ENCODE measurements at regions of chr11 and their contacts with region 1.

Region 1: GRCh38 chr11:3412837-3413236 is 33.9 kb upstream of the ZNF195 start:
- DNase-seq: no peak
- ATAC-seq: no peak
- H3K4me3 ChIP-seq: no peak overlapping the region
- H3K4me3 Mint-ChIP-seq: no peak overlapping the region
- H3K27ac ChIP-seq: no peak overlapping the region
- H3K27ac Mint-ChIP-seq: no peak overlapping the region
- H3K4me1 ChIP-seq: no peaks in the 10 kb centered on the region
- H3K4me1 Mint-ChIP-seq: peaks cover 9% of the 10 kb centered on the region
- H3K27me3 ChIP-seq: no peaks in the 10 kb centered on the region
- H3K27me3 Mint-ChIP-seq: no peaks in the 10 kb centered on the region
- CTCF ChIP-seq: no peak

Region 2: GRCh38 chr11:3060436-3061025 is 352.3 kb before region 1 on chr11:
- CTCF ChIA-PET with region 1: no interaction called
- POLR2A ChIA-PET with region 1: no interaction called
- intact Hi-C with region 1: no loop called
- DNase-seq: no peak
- ATAC-seq: no peak
- H3K4me3 ChIP-seq: no peak overlapping the region
- H3K4me3 Mint-ChIP-seq: no peak overlapping the region
- H3K27ac ChIP-seq: no peak overlapping the region
- H3K27ac Mint-ChIP-seq: no peak overlapping the region
- H3K4me1 ChIP-seq: peaks cover 22% of the 10 kb centered on the region
- H3K4me1 Mint-ChIP-seq: peaks cover 17% of the 10 kb centered on the region
- H3K27me3 ChIP-seq: no peaks in the 10 kb centered on the region
- H3K27me3 Mint-ChIP-seq: no peaks in the 10 kb centered on the region
- CTCF ChIP-seq: no peak

Region 3: DNA sequence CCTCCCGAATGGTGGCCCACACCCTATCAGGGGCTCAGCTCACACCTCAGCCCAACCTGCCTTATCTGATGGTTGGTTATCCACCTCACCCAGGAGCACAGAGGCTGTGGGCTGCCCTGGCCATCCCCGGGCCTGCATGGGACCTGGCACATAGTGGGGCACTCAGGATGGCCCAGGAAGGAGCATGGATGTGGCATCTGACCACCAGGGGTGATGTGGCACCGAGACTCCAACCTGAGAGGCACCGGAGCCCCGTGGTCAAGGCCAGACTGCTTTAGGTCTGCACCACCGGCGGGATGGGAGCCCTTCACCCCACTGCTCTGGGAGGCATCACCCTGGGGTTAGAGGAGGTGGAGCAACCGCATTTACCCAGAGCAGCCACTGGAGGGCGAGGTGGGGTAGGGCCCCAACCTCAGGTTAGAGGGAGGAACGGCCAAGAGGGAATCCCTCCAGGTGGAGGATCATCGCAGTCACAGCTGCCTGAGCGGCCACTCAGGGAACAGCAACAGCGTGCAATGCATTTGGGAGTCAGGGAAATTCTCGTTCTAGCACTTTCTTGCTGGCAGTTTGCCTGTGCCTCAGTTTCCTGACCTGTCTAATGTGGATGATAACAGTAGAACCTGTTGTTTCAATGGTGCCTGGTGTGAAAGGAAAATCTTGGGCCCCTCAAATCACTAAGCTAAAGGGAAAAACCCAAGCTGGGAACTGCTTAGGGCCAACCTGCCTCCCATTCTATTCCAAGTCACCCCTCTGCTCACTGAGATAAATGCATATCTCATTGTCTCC is 302.7 kb before region 1 on chr11:
- CTCF ChIA-PET with region 1: no interaction called
- POLR2A ChIA-PET with region 1: no interaction called
- intact Hi-C with region 1: loop called in 1 of 2 experiments (anchors 10 kb)
- DNase-seq: peak in 7 of 14 experiments; percentile 10 to 59 (median 46)
- ATAC-seq: peak; percentile 81
- H3K4me3 ChIP-seq: no peak overlapping the region
- H3K4me3 Mint-ChIP-seq: no peak overlapping the region
- H3K27ac ChIP-seq: no peak overlapping the region
- H3K27ac Mint-ChIP-seq: no peak overlapping the region
- H3K4me1 ChIP-seq: no peaks in the 10 kb centered on the region
- H3K4me1 Mint-ChIP-seq: no peaks in the 10 kb centered on the region
- H3K27me3 ChIP-seq: no peaks in the 10 kb centered on the region
- H3K27me3 Mint-ChIP-seq: no peaks in the 10 kb centered on the region
- CTCF ChIP-seq: peak; percentile 51

Region 4: GRCh38 chr11:3341298-3341697 is 71.5 kb before region 1 on chr11:
- CTCF ChIA-PET with region 1: interaction called, 20 read pairs
- POLR2A ChIA-PET with region 1: interaction called, 8 read pairs
- intact Hi-C with region 1: loop called in 1 of 2 experiments (anchors 5 kb)
- DNase-seq: peak; percentile 46 to 77 (median 63)
- ATAC-seq: no peak
- H3K4me3 ChIP-seq: no peak overlapping the region
- H3K4me3 Mint-ChIP-seq: no peak overlapping the region
- H3K27ac ChIP-seq: no peak overlapping the region
- H3K27ac Mint-ChIP-seq: no peak overlapping the region
- H3K4me1 ChIP-seq: no peaks in the 10 kb centered on the region
- H3K4me1 Mint-ChIP-seq: no peaks in the 10 kb centered on the region
- H3K27me3 ChIP-seq: peaks cover 7 to 16% of the 10 kb centered on the region in 2 experiments
- H3K27me3 Mint-ChIP-seq: peaks cover 50% of the 10 kb centered on the region
- CTCF ChIP-seq: peak; percentile 71

Region 5: DNA sequence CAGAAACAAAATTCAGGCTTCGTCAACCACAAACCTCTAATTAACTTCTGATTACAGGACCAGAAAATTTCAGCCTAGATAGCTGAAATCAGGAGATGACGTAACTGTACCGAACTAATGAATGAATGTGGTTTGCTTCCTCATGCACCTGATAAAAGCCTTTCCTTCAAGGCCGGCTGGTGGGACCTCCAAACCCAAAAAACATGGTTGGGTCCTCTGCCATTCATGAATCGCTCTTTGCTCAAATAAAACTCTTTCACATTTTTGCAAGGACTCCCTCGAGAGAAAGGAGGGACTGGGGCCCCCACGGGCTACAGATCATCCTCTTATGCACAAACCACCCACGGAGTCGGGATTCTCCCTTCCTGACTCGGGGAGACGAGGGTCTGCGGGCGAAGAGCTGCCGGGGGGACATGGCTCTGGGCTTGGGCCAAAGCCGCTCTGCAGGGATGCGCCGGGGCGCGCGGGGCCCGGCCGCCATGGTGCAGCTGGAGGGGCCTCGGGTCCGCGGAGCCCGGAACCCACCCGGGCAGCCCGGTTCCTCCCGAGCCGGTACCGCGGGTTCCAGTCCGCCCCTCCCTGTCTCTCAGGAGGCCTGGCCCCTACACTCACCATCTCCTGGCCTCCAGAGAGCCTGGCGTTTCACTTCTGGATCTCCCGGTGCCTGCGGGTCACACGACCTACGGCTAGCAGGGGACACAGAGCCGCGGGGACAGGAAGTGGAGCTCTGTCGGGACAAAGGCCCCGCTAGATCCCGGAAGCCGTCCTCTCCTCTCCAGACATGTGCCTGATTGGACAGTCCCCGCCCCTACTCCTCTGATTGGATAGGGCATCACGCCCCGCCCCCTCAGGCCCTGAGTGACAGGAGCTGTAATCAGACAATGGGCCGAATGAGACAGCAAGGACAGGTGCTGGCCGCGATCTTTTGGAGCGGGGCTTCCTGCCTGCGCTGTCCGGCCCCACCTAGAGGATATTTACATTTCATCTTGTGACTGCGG is 34.1 kb before region 1 on chr11 and contains the start of gene ZNF195:
- CTCF ChIA-PET with region 1: interaction called, 14 read pairs
- POLR2A ChIA-PET with region 1: interaction called, 5 read pairs
- intact Hi-C with region 1: no loop called
- DNase-seq: peak; percentile 92 to 98 (median 96)
- ATAC-seq: peak; percentile 100
- H3K4me3 ChIP-seq: peak within 1 kb of the TSS; percentile 89
- H3K4me3 Mint-ChIP-seq: peak within 1 kb of the TSS; percentile 100
- H3K27ac ChIP-seq: peak within 1 kb of the TSS; percentile 68 to 77
- H3K27ac Mint-ChIP-seq: peak within 1 kb of the TSS; percentile 96
- H3K4me1 ChIP-seq: peaks cover 30% of the 10 kb centered on the region
- H3K4me1 Mint-ChIP-seq: peaks cover 54% of the 10 kb centered on the region
- H3K27me3 ChIP-seq: no peaks in the 10 kb centered on the region
- H3K27me3 Mint-ChIP-seq: no peaks in the 10 kb centered on the region
- CTCF ChIP-seq: no peak
- total RNA-seq, gene ZNF195: 16.6 to 18.4 TPM